ENCODE measurements at regions of chr15 and their contacts with region 1.

Region 1: DNA sequence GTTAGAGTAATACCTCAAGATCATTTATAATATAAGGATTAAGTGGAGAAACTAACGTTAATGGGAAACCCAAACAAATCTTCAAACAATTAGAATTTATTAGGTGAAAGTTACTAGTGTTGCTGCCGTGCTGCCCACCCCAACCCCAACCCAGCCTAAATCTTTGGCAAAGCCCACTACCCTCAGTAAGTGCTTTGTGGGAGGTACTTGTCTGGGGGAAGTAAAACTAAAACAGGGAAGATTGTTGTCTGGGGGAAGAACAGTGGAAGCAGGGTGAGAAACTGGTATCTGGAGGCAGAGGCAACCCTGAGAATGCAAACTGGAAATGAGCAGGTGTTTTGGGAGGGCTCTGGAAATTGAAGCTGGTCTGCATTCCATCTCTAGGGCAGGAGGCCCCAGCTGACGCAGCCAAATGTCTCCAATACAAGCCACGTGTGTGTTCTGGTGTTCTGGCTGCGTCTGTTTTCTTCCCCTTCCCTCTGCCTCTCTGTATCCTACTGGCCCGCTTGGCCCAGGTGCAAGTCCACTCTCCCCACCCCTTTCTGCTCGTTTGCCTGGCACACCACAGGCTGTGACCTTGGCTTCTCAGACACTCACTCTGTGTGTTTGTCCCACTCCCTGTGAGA is 32.7 kb downstream of the FEM1B start:
- DNase-seq: no peak
- ATAC-seq: peak; percentile 80

Region 2: GRCh38 chr15:68335251-68335650 is 25.0 kb after region 1 on chr15:
- intact Hi-C with region 1: loop called (anchors 2 kb)
- DNase-seq: no peak
- ATAC-seq: peak; percentile 47